IMR-90 (cell line): ENCODE measurements at regions of chr2 and their contacts with region 1.

Region 1: DNA sequence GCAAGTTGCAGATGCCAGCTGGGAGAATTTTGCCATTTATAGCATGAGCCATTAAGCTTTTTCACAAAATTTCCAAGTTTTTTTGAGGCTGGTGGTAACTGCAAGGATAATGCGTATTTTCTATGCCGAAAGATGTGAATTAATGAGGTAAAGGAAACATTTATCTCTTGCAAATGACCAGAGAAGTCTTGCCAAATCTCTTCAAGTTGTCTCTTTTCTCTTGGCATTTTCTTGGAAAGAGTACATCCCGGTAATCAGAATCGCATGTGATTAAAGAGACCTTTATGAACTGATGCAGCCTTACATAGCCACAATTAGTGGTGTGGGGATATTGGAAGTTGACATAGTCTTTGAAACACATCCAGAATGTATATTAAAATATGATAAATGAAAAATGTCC is 136.5 kb upstream of the MMADHC start:
- DNase-seq: no peak
- ATAC-seq: no peak
- H3K4me3 ChIP-seq: no peak overlapping the region
- H3K27ac ChIP-seq: no peak overlapping the region
- H3K4me1 ChIP-seq: peaks cover 6% of the 10 kb centered on the region
- H3K27me3 ChIP-seq: no peaks in the 10 kb centered on the region
- CTCF ChIP-seq: no peak
- POLR2A ChIP-seq: no peak
- RAD21 ChIP-seq: no peak

Region 2: DNA sequence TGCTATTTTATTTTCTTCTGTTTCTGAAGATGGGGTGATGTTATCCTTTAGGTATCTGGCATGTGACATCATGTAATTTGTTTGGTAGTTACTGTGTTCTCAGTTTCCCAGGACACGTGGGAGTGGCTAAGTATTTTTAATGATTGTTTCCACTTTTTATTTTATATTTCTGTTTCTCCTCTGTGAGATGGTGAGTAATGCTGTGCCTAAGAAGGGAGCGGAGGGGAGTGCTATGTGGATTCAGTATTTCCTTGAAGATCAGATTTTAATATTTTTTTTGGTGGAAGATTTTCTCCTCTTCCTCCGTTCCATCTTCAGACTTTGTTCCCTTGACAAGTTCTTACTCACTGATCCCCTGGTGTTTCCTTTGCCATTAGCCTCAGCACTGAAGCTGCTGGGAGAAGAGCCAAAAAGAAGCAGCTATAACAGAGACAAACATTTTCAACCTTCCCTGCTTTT is 43.5 kb after region 1 on chr2:
- CTCF ChIA-PET with region 1: no interaction called
- POLR2A ChIA-PET with region 1: interaction called, 10 read pairs
- dilution Hi-C with region 1: no loop called
- in situ Hi-C with region 1: no loop called
- intact Hi-C with region 1: no loop called
- DNase-seq: peak; percentile 59
- ATAC-seq: peak; percentile 61
- H3K4me3 ChIP-seq: no peak overlapping the region
- H3K27ac ChIP-seq: no peak overlapping the region
- H3K4me1 ChIP-seq: peaks cover 7% of the 10 kb centered on the region
- H3K27me3 ChIP-seq: no peaks in the 10 kb centered on the region
- CTCF ChIP-seq: no peak
- POLR2A ChIP-seq: no peak
- RAD21 ChIP-seq: no peak

Region 3: GRCh38 chr2:150528861-150529801 is 805.0 kb after region 1 on chr2:
- CTCF ChIA-PET with region 1: no interaction called
- POLR2A ChIA-PET with region 1: no interaction called
- dilution Hi-C with region 1: no loop called
- in situ Hi-C with region 1: no loop called
- intact Hi-C with region 1: no loop called
- DNase-seq: peak; percentile 79
- ATAC-seq: peak; percentile 47
- H3K4me3 ChIP-seq: peak overlapping the region; percentile 5; the same call in 1 of the 2 replicates
- H3K27ac ChIP-seq: peak overlapping the region; percentile 90
- H3K4me1 ChIP-seq: peaks cover 29% of the 10 kb centered on the region
- H3K27me3 ChIP-seq: no peaks in the 10 kb centered on the region
- CTCF ChIP-seq: no peak
- POLR2A ChIP-seq: no peak
- RAD21 ChIP-seq: no peak

Region 4: DNA sequence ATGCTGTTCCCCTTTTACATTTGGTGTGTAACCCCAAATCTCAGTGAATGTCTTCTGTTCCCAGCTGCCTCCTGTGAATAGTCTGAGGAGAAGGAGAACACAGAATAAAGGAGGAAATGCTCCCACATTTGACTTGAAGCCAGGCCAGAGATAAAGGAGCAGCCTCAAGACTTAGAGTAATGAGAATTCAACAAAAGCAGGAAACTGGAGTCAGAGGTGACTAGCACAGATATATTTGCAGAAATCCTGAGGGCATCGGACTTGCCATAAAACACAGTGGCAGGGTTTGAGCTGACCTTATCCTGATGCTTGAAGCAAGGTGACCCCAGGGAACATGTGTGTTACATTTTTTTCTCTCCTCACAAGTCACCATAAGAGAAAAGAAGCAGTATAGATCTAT is 1054.7 kb after region 1 on chr2:
- CTCF ChIA-PET with region 1: no interaction called
- POLR2A ChIA-PET with region 1: no interaction called
- dilution Hi-C with region 1: no loop called
- in situ Hi-C with region 1: no loop called
- intact Hi-C with region 1: no loop called
- DNase-seq: no peak
- ATAC-seq: 0 out of 2 replicates have a peak, but pooled peaks have one; percentile 14
- H3K4me3 ChIP-seq: no peak overlapping the region
- H3K27ac ChIP-seq: no peak overlapping the region
- H3K4me1 ChIP-seq: peaks cover 3% of the 10 kb centered on the region; the same call in 1 of the 2 replicates
- H3K27me3 ChIP-seq: no peaks in the 10 kb centered on the region
- CTCF ChIP-seq: no peak
- POLR2A ChIP-seq: no peak
- RAD21 ChIP-seq: no peak